Breast epithelium (tissue), 4 donors: ENCODE measurements at regions of chr10 and their contacts with region 1.

Region 1: GRCh38 chr10:108849688-108850087 is 1073.6 kb downstream of the XPNPEP1 start:
- DNase-seq: no peak
- H3K4me3 ChIP-seq: no peak overlapping the region
- H3K27ac ChIP-seq: no peak overlapping the region
- H3K4me1 ChIP-seq: no peaks in the 10 kb centered on the region
- H3K27me3 ChIP-seq: no peaks in the 10 kb centered on the region
- CTCF ChIP-seq: no peak
- POLR2A ChIP-seq: no peak

Region 2: DNA sequence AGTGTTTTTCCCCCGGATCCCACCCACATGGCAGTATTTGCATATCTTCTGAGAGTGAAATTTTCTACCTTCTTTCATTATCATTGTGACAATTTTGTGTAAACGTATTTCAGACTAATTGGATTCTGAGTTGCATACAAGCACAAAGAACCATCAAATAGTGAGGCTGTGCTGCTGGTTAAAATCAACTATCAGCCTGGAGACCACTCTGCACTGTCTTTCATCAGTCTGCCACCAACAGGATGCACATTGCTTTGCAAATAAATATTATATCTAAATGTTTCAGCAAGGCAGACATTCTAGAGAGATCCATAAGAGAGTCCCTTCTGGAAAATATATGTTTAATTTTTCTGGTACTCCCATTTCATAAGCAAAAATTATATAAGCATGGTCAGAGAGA is 221.9 kb after region 1 on chr10:
- intact Hi-C with region 1: loop called (anchors 5 kb)
- DNase-seq: no peak
- H3K4me3 ChIP-seq: no peak overlapping the region
- H3K27ac ChIP-seq: no peak overlapping the region
- H3K4me1 ChIP-seq: no peaks in the 10 kb centered on the region
- H3K27me3 ChIP-seq: no peaks in the 10 kb centered on the region
- CTCF ChIP-seq: no peak
- POLR2A ChIP-seq: no peak

Region 3: GRCh38 chr10:110260746-110261477 is 1411.2 kb after region 1 on chr10:
- intact Hi-C with region 1: no loop called
- DNase-seq: no peak
- H3K4me3 ChIP-seq: no peak overlapping the region
- H3K27ac ChIP-seq: peak overlapping the region; percentile 30 to 43
- H3K4me1 ChIP-seq: no peaks in the 10 kb centered on the region
- H3K27me3 ChIP-seq: no peaks in the 10 kb centered on the region
- CTCF ChIP-seq: no peak
- POLR2A ChIP-seq: no peak